ENCODE measurements at regions of chr18 and their contacts with region 1.

Region 1: DNA sequence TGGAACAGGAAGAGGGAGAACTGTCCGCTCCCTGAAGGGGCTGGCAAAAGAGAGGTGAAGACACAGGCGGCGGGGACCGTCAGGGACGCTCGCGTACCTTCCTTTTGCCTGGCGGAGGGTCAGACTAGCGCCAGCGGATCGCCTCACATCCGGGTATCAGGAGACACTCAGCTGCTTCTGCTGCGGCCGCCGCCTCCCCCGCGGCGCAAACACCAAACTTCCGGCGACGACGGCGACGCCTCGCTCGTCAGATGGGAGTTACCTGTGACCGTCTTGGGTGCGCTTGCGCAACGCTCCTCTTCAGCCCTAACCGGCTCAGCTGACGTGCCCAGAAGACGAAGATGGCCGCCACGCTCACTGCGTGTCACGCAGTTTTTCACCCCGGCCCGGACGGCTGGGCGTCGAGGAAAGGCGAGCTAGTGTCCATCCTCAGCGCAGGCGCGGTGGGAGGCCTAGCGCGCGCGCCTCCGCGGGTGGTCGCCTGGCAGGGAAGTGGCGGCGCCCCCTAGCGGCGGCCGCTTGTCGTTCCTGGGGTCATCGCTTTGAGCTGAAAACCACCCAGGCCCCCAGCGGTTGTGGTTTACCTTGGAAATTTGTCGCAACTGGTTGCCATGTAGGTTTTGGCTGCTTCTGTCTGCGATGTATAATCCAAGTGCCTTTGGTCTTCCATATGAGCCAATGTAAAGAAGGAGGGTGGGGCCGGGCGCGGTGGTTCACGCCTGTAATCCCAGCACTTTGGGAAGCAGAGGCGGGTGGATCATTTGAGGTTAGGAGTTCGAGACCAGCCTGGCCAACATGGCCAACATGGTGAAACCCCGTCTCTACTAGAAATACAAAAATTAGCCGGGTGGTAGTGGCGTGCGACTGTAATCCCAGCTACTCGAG is at the start of gene ESCO1:
- DNase-seq: peak; percentile 98
- ATAC-seq: peak; percentile 91
- H3K4me3 ChIP-seq: peak within 1 kb of the TSS; percentile 99
- H3K27ac ChIP-seq: peak within 1 kb of the TSS; percentile 94
- H3K4me1 ChIP-seq: peaks cover 14% of the 10 kb centered on the region
- H3K27me3 ChIP-seq: no peaks in the 10 kb centered on the region
- CTCF ChIP-seq: peak; percentile 80
- total RNA-seq, gene ESCO1: 17.0 and 17.5 TPM in 2 replicates

Region 2: GRCh38 chr18:21629089-21629832 is 28.5 kb after region 1 on chr18:
- CTCF ChIA-PET with region 1: interaction called, 3 read pairs
- POLR2A ChIA-PET with region 1: interaction called, 14 read pairs
- intact Hi-C with region 1: no loop called
- DNase-seq: no peak
- ATAC-seq: no peak
- H3K4me3 ChIP-seq: no peak overlapping the region
- H3K27ac ChIP-seq: no peak overlapping the region
- H3K4me1 ChIP-seq: no peaks in the 10 kb centered on the region
- H3K27me3 ChIP-seq: no peaks in the 10 kb centered on the region
- CTCF ChIP-seq: no peak